Caco-2 (cell line): ENCODE measurements at regions of chr16 and their contacts with region 1.

Region 1: DNA sequence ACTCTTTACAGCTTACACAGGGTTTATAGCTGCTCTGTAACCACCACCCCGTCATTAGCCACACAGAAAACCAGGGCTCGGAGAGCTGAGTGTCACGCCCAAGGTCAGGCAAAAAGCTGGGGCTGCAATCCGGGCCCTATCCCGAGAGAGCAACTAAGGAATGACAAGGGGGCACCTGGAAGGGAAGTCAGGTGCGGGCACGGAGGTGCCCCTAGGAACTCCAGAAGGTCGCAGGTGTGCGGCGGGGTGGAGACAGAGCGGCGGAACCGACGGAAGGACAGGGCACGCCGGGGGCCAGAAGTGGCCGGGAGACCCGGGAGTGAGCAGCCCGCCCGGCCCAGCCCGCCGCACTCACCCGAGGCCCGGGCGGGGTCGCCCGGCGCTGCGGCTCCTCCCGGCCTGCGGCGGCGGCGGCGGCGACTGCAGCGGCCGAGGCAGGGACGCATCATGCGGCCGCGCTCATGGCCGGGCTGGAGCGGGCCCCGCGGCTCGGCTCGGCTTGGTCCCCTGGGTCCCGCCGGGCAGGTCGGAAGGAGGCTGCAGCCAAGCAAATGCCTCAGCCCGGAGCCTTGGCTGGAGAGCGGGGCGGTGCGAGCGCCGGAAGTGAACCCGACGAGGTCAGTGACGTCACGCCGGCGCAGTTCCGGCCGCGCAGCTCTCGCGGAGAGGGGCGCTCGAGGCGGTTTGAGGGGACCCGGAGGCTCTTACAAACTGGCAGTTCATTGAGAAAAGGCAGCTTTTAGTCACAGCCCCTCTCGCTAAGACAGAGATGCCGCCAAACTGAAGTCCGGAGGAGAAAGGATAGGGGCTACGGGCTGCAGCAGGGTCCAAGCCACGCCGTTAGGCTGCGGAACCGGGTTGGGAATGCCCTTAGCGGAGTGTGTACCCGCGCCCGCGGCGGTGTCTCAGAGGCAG is at the start of gene ZDHHC7:
- DNase-seq: peak; percentile 86 to 90
- H3K4me3 ChIP-seq: peak within 1 kb of the TSS; percentile 97
- H3K4me3 Mint-ChIP-seq: peak within 1 kb of the TSS; percentile 100
- H3K27ac Mint-ChIP-seq: peak within 1 kb of the TSS; percentile 94
- H3K4me1 ChIP-seq: peaks cover 33% of the 10 kb centered on the region
- H3K4me1 Mint-ChIP-seq: peaks cover 27% of the 10 kb centered on the region
- H3K27me3 ChIP-seq: no peaks in the 10 kb centered on the region
- H3K27me3 Mint-ChIP-seq: no peaks in the 10 kb centered on the region
- CTCF ChIP-seq: peak in 1 of 2 experiments; percentile 9
- total RNA-seq, gene ZDHHC7: 82.8 and 85.7 TPM in 2 replicates

Region 2: DNA sequence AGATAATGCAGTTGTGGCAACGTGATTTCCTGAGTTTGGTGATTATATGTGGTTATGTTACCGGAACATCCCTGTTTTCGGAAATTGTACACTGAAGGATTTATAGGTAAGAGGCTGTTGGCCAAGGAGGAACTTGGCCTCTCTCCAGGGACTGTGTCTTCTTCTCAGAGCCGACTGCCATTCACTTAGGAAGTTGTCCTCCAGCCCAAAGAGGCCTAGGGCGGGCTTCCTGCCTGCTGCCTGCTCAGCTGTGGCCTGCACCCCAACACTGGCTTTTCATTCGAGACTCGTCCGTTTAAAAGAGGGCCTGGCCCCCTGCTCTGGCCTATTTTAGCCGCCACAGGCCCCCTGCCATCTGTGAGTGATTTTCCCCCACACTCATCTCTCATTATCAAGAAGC is 64.2 kb before region 1 on chr16:
- CTCF ChIA-PET with region 1: no interaction called
- POLR2A ChIA-PET with region 1: no interaction called
- intact Hi-C with region 1: no loop called
- DNase-seq: no peak
- H3K4me3 ChIP-seq: no peak overlapping the region
- H3K4me3 Mint-ChIP-seq: no peak overlapping the region
- H3K27ac Mint-ChIP-seq: no peak overlapping the region
- H3K4me1 ChIP-seq: peaks cover 21% of the 10 kb centered on the region
- H3K4me1 Mint-ChIP-seq: no peaks in the 10 kb centered on the region
- H3K27me3 ChIP-seq: no peaks in the 10 kb centered on the region
- H3K27me3 Mint-ChIP-seq: no peaks in the 10 kb centered on the region
- CTCF ChIP-seq: no peak

Region 3: DNA sequence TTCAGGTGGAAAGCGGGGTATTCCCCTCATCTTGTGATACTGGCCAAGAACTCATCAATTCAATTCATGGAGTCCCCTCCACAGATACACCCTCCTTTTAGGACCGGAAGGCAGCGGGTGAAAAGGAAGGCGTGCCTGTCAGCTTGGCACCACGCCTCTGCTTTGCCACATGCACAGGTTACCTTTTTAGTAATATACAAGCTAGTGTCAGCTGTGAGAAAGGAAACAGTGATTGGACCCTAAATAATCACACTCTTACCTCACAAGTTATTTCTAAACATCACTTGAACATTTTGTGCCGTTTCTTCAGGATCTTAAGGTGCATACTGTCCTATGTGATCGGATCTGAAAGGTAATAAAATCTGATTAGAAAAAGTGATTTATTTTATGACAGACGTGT is 15.5 kb before region 1 on chr16:
- CTCF ChIA-PET with region 1: no interaction called
- POLR2A ChIA-PET with region 1: interaction called, 15 read pairs
- intact Hi-C with region 1: loop called (anchors 1 kb)
- DNase-seq: no peak
- H3K4me3 ChIP-seq: no peak overlapping the region
- H3K4me3 Mint-ChIP-seq: peak overlapping the region; percentile 62
- H3K27ac Mint-ChIP-seq: peak overlapping the region; percentile 98
- H3K4me1 ChIP-seq: peaks cover 45% of the 10 kb centered on the region
- H3K4me1 Mint-ChIP-seq: peaks cover 45% of the 10 kb centered on the region
- H3K27me3 ChIP-seq: no peaks in the 10 kb centered on the region
- H3K27me3 Mint-ChIP-seq: no peaks in the 10 kb centered on the region
- CTCF ChIP-seq: no peak

Region 4: GRCh38 chr16:85027349-85027957 is 16.3 kb after region 1 on chr16 and contains the start of gene KIAA0513:
- CTCF ChIA-PET with region 1: interaction called, 7 read pairs
- POLR2A ChIA-PET with region 1: interaction called, 14 read pairs
- intact Hi-C with region 1: loop called (anchors 1 kb)
- DNase-seq: peak; percentile 95 to 99
- H3K4me3 ChIP-seq: peak within 1 kb of the TSS; percentile 89
- H3K4me3 Mint-ChIP-seq: peak within 1 kb of the TSS; percentile 92
- H3K27ac Mint-ChIP-seq: peak within 1 kb of the TSS; percentile 83
- H3K4me1 ChIP-seq: peaks cover 28% of the 10 kb centered on the region
- H3K4me1 Mint-ChIP-seq: peaks cover 26% of the 10 kb centered on the region
- H3K27me3 ChIP-seq: peaks cover 1% of the 10 kb centered on the region; the same call in 1 of the 2 replicates
- H3K27me3 Mint-ChIP-seq: no peaks in the 10 kb centered on the region
- CTCF ChIP-seq: peak in 1 of 2 experiments; percentile 65
- total RNA-seq, gene KIAA0513: 7.1 and 7.9 TPM in 2 replicates